ENCODE measurements at regions of chr11 and their contacts with region 1.

Region 1: DNA sequence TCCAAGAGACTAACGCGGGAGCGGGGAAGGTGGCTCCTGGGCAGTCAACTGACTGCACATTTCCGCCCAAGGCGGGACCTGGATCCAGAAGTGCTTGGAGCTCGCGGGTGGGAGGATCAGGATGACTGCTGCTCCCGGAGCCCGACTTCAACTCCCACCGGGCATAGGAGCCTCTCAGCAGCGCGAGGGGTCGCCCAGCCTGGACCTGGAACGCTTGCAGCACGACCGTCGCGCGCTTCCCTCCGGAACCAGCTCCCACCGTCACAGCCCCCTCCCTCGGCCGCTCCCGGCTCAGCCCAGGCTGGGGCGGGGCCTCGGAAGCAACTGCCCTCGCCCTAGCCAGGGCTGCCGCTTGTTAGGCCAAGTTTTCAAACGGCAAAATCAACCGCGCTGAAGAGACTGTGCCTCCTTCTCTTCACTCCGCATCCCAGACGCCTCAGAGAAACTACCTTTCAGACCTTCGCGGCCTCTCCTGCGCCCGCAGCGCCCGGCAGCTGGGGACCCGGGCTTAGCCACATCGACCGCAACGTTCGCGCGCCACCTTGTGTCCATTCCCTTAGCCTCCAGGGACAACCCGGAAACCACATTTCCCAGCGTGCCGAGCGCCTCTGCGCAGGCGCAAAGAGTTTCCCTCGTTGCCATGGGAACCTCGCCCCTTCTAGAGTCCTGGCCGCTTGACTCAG is 14.0 kb downstream of the SSH3 start:
- DNase-seq: peak; percentile 96 to 99
- H3K4me3 ChIP-seq: peak overlapping the region; percentile 76
- H3K27ac ChIP-seq: peak overlapping the region; percentile 67
- H3K4me1 ChIP-seq: peaks cover 42% of the 10 kb centered on the region
- H3K27me3 ChIP-seq: no peaks in the 10 kb centered on the region
- CTCF ChIP-seq: peak; percentile 96

Region 2: DNA sequence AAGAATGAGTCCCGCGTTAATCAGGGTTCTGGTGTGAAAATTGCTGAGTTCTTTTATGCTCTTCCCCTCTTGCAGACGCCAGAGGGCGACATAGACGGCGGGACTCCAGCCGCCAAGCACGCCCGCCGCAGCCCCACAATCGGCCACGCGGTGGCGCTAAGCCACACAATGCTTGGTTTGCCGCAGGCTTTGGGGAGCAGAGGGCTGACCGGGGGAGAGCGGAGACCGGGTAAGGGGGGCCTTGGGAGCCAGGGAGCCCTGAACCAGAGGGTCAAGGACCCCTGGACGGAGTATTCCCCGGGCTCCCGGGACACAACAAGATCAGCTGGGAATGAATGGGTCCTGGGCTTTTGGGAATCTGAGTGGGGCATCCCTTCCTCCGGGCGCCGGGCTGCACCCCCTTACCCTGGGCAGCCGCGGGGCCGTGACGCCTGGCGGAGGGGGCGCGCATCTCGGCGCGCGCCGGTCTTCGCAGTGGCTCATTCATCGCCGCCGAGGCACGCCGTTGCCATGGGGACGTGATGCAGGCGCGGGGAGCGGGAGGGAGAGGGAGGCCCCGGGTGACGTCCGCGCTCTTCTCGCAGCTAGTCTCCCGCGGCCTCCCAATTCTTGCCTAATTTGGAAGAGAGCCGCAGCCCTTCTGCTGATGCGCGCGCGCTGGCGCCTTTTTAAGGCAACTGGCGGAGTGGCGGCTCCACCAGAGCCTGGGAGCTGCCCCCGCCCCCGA is 908.7 kb before region 1 on chr11:
- CTCF ChIA-PET with region 1: no interaction called
- POLR2A ChIA-PET with region 1: no interaction called
- intact Hi-C with region 1: loop called (anchors 5 kb)
- DNase-seq: peak; percentile 58 to 87
- H3K4me3 ChIP-seq: no peak overlapping the region
- H3K27ac ChIP-seq: no peak overlapping the region
- H3K4me1 ChIP-seq: no peaks in the 10 kb centered on the region
- H3K27me3 ChIP-seq: peaks cover 88% of the 10 kb centered on the region
- CTCF ChIP-seq: peak; percentile 100

Region 3: DNA sequence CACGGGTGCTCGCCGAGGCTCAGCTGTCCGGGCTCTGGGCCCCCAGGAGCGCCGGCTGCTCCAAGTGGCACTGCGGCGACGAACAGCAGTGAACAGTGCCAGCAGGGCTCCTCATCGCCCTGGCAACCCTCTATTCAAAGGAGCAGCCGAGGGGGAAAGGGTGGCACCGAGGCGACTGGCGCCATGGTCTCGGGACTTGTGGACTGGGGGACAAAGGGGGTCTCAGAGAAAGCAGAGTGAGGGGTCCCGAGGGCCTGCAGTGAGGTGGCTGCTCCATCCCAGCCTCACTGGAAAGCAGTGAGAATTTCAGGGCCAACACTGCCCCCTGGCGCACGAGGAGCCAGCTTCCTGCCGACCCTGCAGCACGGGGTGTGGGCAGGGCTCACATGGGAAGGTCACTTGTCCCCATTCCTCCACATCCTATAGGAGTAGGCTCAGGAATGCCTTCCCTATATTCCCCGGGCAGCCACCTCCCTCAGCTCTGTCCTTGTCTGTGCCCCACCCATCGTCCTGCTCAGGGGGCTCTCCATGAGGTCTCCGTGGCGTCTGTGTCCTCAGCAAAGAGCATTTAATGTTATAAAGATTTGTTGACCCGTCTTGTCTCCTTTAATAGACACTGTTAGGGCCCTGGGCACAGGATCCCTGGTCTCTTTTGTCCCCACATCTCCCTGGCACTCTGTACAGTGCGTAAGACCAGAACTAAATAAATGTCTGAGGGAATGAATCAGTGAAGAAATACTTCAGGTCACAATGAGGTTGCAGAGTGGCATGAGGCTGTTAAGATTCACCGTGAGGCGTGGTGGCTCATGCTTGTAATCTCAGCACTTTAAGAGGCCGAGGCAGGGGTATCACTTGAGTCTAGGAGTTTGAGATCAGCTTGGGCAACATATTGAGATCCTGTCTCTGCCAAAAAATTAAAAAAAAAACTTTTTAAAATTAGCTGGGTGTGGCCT is 434.1 kb before region 1 on chr11:
- CTCF ChIA-PET with region 1: no interaction called
- POLR2A ChIA-PET with region 1: interaction called, 5 read pairs
- intact Hi-C with region 1: loop called (anchors 5 kb)
- DNase-seq: peak; percentile 85 to 89
- H3K4me3 ChIP-seq: peak overlapping the region; percentile 2; the same call in 1 of the 2 replicates
- H3K27ac ChIP-seq: peak overlapping the region; percentile 78
- H3K4me1 ChIP-seq: peaks cover 49% of the 10 kb centered on the region
- H3K27me3 ChIP-seq: no peaks in the 10 kb centered on the region
- CTCF ChIP-seq: peak; percentile 86

Region 4: DNA sequence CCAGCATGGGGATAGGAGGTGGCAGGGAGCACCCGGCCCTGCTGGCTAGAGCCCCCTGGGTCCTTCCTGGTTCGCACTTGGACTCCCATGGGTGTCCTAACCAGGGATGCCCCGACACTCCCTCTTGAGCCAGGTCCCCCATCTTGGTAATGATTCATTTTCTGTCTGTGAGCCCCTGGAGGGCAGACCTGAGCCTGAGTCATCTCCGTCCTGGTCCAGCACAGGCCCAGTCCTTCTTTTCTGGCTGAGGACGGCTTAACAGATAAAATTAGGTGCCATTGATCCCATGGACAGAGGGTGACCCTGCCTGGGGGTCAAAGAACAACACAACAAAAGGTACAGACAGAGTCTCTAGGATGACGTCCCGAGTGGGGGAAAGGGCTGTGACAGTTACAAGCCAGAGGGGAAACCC is 257.2 kb before region 1 on chr11:
- CTCF ChIA-PET with region 1: interaction called, 7 read pairs
- POLR2A ChIA-PET with region 1: interaction called, 9 read pairs
- intact Hi-C with region 1: loop called (anchors 1 kb)
- DNase-seq: peak; percentile 54 to 57
- H3K4me3 ChIP-seq: no peak overlapping the region
- H3K27ac ChIP-seq: peak overlapping the region; percentile 37
- H3K4me1 ChIP-seq: peaks cover 73% of the 10 kb centered on the region
- H3K27me3 ChIP-seq: no peaks in the 10 kb centered on the region
- CTCF ChIP-seq: no peak

Region 5: DNA sequence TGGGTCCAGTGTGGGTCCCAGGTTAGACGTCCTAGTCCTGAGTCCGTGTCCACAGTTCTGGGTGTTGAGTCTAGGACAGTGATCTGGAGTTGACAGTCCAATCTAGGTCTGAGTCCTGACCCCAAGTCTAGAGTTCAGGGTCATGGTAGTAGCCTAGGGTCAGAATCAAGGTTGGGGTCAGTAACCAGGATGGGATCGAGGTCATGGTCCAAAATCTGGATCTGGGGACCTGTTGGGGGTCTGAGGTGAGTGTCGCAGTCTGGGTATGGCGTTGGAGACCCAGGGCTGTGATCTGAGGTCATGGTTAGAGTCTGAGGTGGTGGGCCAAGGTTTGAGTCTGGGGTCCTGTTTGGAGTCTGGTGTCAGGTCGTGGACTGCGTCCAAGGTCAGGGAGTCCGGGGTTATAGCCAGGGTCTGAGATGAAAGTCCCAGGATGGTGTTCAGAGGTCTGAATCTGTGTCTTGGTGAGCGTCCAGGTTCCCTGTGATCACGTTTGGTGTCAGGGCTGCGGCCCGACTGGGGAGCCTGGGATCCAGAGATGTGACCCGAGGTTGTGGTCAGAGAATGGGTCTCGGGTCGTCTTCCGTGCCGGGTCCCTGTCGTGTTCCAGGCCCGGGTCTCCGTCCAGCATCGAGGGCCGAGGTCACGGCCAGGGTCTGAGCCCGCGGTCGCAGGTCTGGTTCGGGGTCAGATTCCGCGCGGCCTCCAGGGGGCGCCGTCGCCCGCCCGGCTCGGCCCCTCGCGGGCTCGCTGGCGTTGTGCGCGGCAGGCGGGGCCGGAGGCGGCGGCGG is 51.5 kb before region 1 on chr11:
- CTCF ChIA-PET with region 1: interaction called, 18 read pairs
- POLR2A ChIA-PET with region 1: interaction called, 3 read pairs
- intact Hi-C with region 1: loop called (anchors 1 kb)
- DNase-seq: peak in 1 of 2 experiments; percentile 88
- H3K4me3 ChIP-seq: peak overlapping the region; percentile 32; the same call in 1 of the 2 replicates
- H3K27ac ChIP-seq: no peak overlapping the region
- H3K4me1 ChIP-seq: peaks cover 38% of the 10 kb centered on the region
- H3K27me3 ChIP-seq: no peaks in the 10 kb centered on the region
- CTCF ChIP-seq: peak; percentile 77

Region 6: DNA sequence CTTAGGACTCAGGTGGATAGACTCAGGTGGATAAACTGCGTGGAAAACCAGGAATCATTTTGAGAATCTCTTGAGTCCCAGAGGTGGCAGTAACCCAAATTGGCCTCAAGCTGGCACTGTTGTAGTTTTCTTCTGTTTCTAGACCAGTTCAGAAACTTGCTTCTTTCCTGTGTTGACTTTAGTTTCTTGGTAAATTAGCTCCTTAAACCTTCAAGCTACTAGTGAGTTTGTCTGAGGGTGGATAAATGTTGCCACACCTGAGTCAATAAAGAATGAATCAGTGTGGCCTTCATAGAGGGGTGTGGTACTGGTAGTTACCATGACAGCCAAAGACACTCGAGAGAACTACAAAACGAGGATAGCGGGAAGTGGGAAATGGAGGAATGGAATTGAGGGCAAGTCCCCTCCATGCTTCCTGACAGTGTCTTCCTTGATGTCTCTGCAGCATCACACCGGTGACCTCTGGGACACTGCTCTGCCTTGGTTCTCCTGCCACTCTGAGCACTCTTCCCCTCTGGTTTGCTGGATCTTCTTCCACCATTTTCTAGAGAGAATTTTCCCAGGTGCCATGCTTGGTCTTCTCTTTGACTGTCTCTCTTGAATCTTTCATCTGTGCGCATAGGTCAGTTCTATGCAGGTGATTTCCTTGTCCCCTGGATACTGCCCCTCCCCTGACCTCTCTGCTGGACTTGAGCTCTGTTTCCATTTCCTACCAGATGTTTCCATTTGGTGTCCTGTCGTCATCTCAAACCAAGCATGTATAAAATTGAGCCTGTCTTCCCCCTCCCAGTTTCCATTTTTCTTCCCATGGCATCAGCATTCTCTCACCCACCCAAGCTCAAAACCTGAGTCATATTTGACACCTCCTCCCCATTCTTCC is 28.8 kb after region 1 on chr11:
- CTCF ChIA-PET with region 1: interaction called, 4 read pairs
- POLR2A ChIA-PET with region 1: interaction called, 4 read pairs
- intact Hi-C with region 1: loop called (anchors 2 kb)
- DNase-seq: peak; percentile 76 to 100
- H3K4me3 ChIP-seq: peak overlapping the region; percentile 11; the same call in 1 of the 2 replicates
- H3K27ac ChIP-seq: peak overlapping the region; percentile 82
- H3K4me1 ChIP-seq: peaks cover 48% of the 10 kb centered on the region
- H3K27me3 ChIP-seq: no peaks in the 10 kb centered on the region
- CTCF ChIP-seq: peak; percentile 96

Region 7: GRCh38 chr11:67391304-67392132 is 74.2 kb after region 1 on chr11 and contains the start of gene RAD9A:
- CTCF ChIA-PET with region 1: interaction called, 14 read pairs
- POLR2A ChIA-PET with region 1: no interaction called
- intact Hi-C with region 1: no loop called
- DNase-seq: peak; percentile 82 to 94
- H3K4me3 ChIP-seq: peak within 1 kb of the TSS; percentile 89
- H3K27ac ChIP-seq: peak within 1 kb of the TSS; percentile 54
- H3K4me1 ChIP-seq: peaks cover 12% of the 10 kb centered on the region; the same call in 1 of the 2 replicates
- H3K27me3 ChIP-seq: no peaks in the 10 kb centered on the region
- CTCF ChIP-seq: no peak
- total RNA-seq, gene RAD9A: 62.8 and 79.8 TPM in 2 replicates

Region 8: DNA sequence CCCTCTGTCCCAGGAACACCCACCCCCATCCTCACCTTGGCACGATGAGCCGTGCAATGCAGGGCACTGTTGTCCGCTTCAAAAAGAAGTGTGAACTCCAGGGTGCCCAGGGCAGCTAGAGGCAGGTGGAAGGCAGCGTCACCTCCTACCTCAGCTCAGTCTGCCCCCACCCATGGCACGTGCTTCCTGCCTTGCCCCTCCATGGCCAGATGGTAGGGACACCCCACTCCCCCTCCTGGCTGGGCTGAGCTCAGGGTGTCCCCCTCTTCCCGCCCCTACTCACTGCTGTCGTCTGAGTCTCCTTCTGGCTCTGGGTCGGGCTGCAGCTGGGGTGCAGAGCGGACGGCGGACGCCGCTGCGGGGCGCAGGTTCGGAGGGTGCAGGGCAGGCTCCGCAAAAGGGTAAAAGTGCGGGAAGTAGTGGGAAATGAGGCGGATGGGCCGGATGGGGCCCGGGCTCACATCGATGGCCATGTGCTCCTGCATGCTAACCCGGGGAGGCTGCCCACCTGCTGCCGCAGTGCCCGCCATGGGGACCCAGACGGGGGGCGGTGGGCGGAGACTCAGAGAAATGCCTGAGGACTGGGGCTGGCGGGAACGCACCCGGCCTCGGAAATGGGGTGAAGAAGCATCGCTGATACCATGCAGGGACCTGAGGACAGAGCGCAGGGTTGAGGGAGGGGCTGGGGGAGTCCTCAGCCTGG is 298.5 kb after region 1 on chr11:
- CTCF ChIA-PET with region 1: no interaction called
- POLR2A ChIA-PET with region 1: no interaction called
- intact Hi-C with region 1: no loop called
- DNase-seq: no peak
- H3K4me3 ChIP-seq: no peak overlapping the region
- H3K27ac ChIP-seq: no peak overlapping the region
- H3K4me1 ChIP-seq: no peaks in the 10 kb centered on the region
- H3K27me3 ChIP-seq: no peaks in the 10 kb centered on the region
- CTCF ChIP-seq: peak; percentile 24; the same call in 1 of the 2 replicates

Region 9: GRCh38 chr11:67630228-67630942 is 313.0 kb after region 1 on chr11:
- CTCF ChIA-PET with region 1: no interaction called
- POLR2A ChIA-PET with region 1: no interaction called
- intact Hi-C with region 1: no loop called
- DNase-seq: peak; percentile 93 to 100
- H3K4me3 ChIP-seq: peak overlapping the region; percentile 87
- H3K27ac ChIP-seq: peak overlapping the region; percentile 50
- H3K4me1 ChIP-seq: peaks cover 8% of the 10 kb centered on the region
- H3K27me3 ChIP-seq: no peaks in the 10 kb centered on the region
- CTCF ChIP-seq: peak; percentile 93

Region 10: GRCh38 chr11:68471360-68472340 is 1154.3 kb after region 1 on chr11:
- CTCF ChIA-PET with region 1: no interaction called
- POLR2A ChIA-PET with region 1: no interaction called
- intact Hi-C with region 1: no loop called
- DNase-seq: no peak
- H3K4me3 ChIP-seq: no peak overlapping the region
- H3K27ac ChIP-seq: no peak overlapping the region
- H3K4me1 ChIP-seq: no peaks in the 10 kb centered on the region
- H3K27me3 ChIP-seq: no peaks in the 10 kb centered on the region
- CTCF ChIP-seq: no peak